ENCODE measurements at regions of chr11 and their contacts with region 1.

Region 1: GRCh38 chr11:47819743-47820142 is 28.4 kb downstream of the NUP160 start:
- DNase-seq: no peak
- ATAC-seq: no peak
- H3K4me3 Mint-ChIP-seq: no peak overlapping the region
- H3K27ac Mint-ChIP-seq: no peak overlapping the region
- H3K4me1 Mint-ChIP-seq: no peaks in the 10 kb centered on the region
- H3K27me3 Mint-ChIP-seq: no peaks in the 10 kb centered on the region

Region 2: DNA sequence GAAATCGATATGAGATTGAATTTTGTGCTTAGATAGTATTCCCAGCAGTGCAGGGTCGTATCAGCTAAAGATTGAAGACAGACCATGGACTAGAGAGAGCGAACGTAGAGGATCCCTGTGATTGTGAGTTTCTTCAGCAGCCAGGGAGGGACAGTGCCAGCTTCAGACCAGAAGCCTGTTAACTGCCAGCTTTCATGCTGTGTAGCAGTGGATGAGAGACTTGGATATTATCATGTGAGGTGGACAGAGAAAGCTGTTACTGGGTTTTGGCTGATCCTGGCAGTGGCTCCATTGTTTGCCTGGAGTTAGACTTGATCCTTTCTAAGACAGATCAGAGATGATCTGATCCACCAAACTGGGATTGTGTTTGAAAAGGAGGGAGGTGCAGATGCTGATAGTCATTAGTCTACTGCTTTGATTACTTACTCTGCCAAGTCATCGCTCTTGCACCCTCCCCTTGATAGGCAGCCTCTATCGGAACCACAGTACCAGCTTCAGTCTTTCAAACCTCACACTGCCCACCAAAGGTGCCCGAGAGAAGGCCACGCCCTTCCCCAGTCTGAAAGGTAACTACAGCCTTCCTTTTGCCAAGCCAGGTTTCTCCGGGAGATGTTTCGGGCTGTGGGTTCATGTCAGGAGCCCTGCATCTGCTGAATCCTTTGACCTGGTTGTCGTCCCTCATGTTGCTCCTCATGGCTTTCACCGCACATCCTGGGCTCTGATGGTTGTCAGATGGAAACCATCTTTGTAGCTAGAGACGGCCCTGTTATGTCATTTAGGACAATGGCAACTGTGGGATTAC is 533.6 kb before region 1 on chr11:
- CTCF ChIA-PET with region 1: no interaction called
- POLR2A ChIA-PET with region 1: no interaction called
- intact Hi-C with region 1: loop called in 1 of 2 experiments (anchors 10 kb)
- DNase-seq: no peak
- ATAC-seq: no peak
- H3K4me3 Mint-ChIP-seq: no peak overlapping the region
- H3K27ac Mint-ChIP-seq: peak overlapping the region; percentile 8
- H3K4me1 Mint-ChIP-seq: no peaks in the 10 kb centered on the region
- H3K27me3 Mint-ChIP-seq: no peaks in the 10 kb centered on the region

Region 3: GRCh38 chr11:47675851-47676250 is 143.9 kb before region 1 on chr11:
- CTCF ChIA-PET with region 1: no interaction called
- POLR2A ChIA-PET with region 1: no interaction called
- intact Hi-C with region 1: no loop called
- DNase-seq: no peak
- ATAC-seq: no peak
- H3K4me3 Mint-ChIP-seq: no peak overlapping the region
- H3K27ac Mint-ChIP-seq: no peak overlapping the region
- H3K4me1 Mint-ChIP-seq: no peaks in the 10 kb centered on the region
- H3K27me3 Mint-ChIP-seq: no peaks in the 10 kb centered on the region

Region 4: DNA sequence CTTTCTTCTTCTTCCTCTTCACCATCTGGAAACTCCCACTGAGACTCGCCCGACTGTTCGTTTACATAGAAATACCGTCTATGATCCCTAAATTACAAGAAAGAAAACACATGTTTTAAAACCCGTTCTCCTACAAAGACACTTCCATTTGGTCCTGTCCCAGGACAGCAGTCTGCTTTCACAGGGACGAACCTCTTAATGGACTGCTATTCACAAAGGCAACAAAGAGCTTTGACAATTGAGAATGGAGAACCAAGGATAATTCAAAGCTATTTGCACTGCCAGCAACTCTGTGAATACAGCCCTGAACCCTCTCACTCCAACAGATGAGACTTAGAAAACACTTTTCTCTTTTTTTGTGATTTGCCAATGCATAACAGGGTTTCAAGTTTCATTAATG is 88.3 kb before region 1 on chr11:
- CTCF ChIA-PET with region 1: no interaction called
- POLR2A ChIA-PET with region 1: no interaction called
- intact Hi-C with region 1: loop called in 1 of 2 experiments (anchors 5 kb)
- DNase-seq: no peak
- ATAC-seq: no peak
- H3K4me3 Mint-ChIP-seq: no peak overlapping the region
- H3K27ac Mint-ChIP-seq: no peak overlapping the region
- H3K4me1 Mint-ChIP-seq: peaks cover 2% of the 10 kb centered on the region
- H3K27me3 Mint-ChIP-seq: no peaks in the 10 kb centered on the region

Region 5: GRCh38 chr11:47869546-47870393 is 50.0 kb after region 1 on chr11:
- CTCF ChIA-PET with region 1: no interaction called
- POLR2A ChIA-PET with region 1: no interaction called
- intact Hi-C with region 1: no loop called
- DNase-seq: no peak
- ATAC-seq: no peak
- H3K4me3 Mint-ChIP-seq: no peak overlapping the region
- H3K27ac Mint-ChIP-seq: no peak overlapping the region
- H3K4me1 Mint-ChIP-seq: peaks cover 7% of the 10 kb centered on the region
- H3K27me3 Mint-ChIP-seq: no peaks in the 10 kb centered on the region

Region 6: GRCh38 chr11:47886096-47886495 is 66.4 kb after region 1 on chr11:
- CTCF ChIA-PET with region 1: no interaction called
- POLR2A ChIA-PET with region 1: no interaction called
- intact Hi-C with region 1: loop called in 1 of 2 experiments (anchors 10 kb)
- DNase-seq: peak; percentile 26
- ATAC-seq: peak; percentile 42
- H3K4me3 Mint-ChIP-seq: no peak overlapping the region
- H3K27ac Mint-ChIP-seq: peak overlapping the region; percentile 78
- H3K4me1 Mint-ChIP-seq: peaks cover 45% of the 10 kb centered on the region
- H3K27me3 Mint-ChIP-seq: no peaks in the 10 kb centered on the region

Region 7: GRCh38 chr11:48093795-48094642 is 274.3 kb after region 1 on chr11:
- CTCF ChIA-PET with region 1: no interaction called
- POLR2A ChIA-PET with region 1: no interaction called
- intact Hi-C with region 1: no loop called
- DNase-seq: no peak
- ATAC-seq: no peak
- H3K4me3 Mint-ChIP-seq: no peak overlapping the region
- H3K27ac Mint-ChIP-seq: no peak overlapping the region
- H3K4me1 Mint-ChIP-seq: peaks cover 63% of the 10 kb centered on the region
- H3K27me3 Mint-ChIP-seq: no peaks in the 10 kb centered on the region

Measured in activated CD4-positive, alpha-beta T cell treated with anti-CD3 and anti-CD28 coated beads for 36 hours (primary cell).